ENCODE measurements at regions of chr20 and their contacts with region 1.

Region 1: GRCh38 chr20:18904624-18905023 is 91.0 kb downstream of the SCP2D1 start:
- DNase-seq: peak in 1 of 2 experiments; percentile 41
- H3K4me3 ChIP-seq: no peak overlapping the region
- H3K4me3 Mint-ChIP-seq: no peak overlapping the region
- H3K27ac Mint-ChIP-seq: no peak overlapping the region
- H3K4me1 ChIP-seq: no peaks in the 10 kb centered on the region
- H3K4me1 Mint-ChIP-seq: no peaks in the 10 kb centered on the region
- H3K27me3 ChIP-seq: no peaks in the 10 kb centered on the region; the same call in 1 of the 2 replicates
- H3K27me3 Mint-ChIP-seq: peaks cover 4% of the 10 kb centered on the region
- CTCF ChIP-seq: peak in 1 of 2 experiments; percentile 66

Region 2: DNA sequence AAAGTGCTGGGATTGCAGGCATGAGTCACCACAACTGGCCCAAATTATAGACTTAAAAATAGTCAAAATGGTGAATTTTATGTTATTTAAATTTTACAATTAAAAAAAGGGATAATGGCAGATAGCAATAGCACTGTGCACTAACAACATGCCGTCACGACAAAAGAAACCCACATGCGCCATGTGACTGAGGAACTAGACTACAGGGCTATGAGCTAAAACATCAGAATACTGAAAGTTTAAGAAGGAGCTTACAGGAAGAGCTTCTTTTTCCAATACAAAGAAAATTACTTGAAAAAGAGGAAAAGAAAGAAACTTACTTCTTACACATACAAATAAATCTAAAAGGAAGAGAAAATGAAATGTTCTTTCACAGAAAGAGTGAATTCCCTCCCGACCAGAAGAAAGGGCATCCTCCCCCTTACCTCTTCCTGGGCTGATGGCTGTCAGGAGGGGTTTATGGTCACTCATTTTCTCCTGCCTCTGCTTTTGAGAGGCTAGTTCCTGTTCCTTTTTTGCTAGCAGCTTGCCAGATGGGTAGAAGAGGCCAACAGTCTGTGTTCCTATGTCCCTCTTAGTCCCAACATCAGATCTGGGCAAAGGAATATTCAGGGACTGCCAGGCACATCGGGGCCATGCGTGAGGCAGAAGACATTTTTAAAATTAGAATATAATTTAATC is 492.3 kb before region 1 on chr20:
- CTCF ChIA-PET with region 1: no interaction called
- POLR2A ChIA-PET with region 1: no interaction called
- intact Hi-C with region 1: loop called (anchors 10 kb)
- DNase-seq: no peak
- H3K4me3 ChIP-seq: peak overlapping the region; percentile 20
- H3K4me3 Mint-ChIP-seq: peak overlapping the region; percentile 70
- H3K27ac Mint-ChIP-seq: peak overlapping the region; percentile 84
- H3K4me1 ChIP-seq: no peaks in the 10 kb centered on the region
- H3K4me1 Mint-ChIP-seq: peaks cover 8% of the 10 kb centered on the region
- H3K27me3 ChIP-seq: no peaks in the 10 kb centered on the region
- H3K27me3 Mint-ChIP-seq: no peaks in the 10 kb centered on the region
- CTCF ChIP-seq: no peak

Region 3: DNA sequence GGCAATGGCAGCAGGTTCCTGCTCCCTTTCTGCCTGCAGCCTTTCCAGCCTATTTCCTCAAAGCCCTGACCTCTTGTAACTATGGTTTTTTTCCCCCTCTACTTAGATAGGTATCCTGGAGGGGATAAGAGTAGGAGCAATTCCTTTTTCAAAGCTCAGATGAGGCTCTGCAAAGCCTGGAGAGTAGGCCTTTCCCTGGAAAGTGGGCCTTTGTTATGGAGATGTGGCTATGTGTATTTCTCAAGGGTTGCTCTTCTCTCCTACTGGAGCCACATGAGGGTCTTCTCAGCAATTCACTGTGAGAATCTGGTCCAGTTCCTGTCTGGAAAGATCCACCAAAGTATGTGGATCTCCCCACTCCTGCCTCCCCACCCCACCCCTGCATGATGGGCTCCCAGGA is 220.8 kb before region 1 on chr20:
- CTCF ChIA-PET with region 1: no interaction called
- POLR2A ChIA-PET with region 1: no interaction called
- intact Hi-C with region 1: no loop called
- DNase-seq: no peak
- H3K4me3 ChIP-seq: no peak overlapping the region
- H3K4me3 Mint-ChIP-seq: no peak overlapping the region
- H3K27ac Mint-ChIP-seq: no peak overlapping the region
- H3K4me1 ChIP-seq: no peaks in the 10 kb centered on the region
- H3K4me1 Mint-ChIP-seq: peaks cover 9% of the 10 kb centered on the region
- H3K27me3 ChIP-seq: no peaks in the 10 kb centered on the region
- H3K27me3 Mint-ChIP-seq: no peaks in the 10 kb centered on the region
- CTCF ChIP-seq: no peak

Region 4: GRCh38 chr20:18837718-18838117 is 66.9 kb before region 1 on chr20:
- CTCF ChIA-PET with region 1: interaction called, 9 read pairs
- POLR2A ChIA-PET with region 1: no interaction called
- intact Hi-C with region 1: loop called (anchors 1 kb)
- DNase-seq: peak; percentile 55 to 61
- H3K4me3 ChIP-seq: no peak overlapping the region
- H3K4me3 Mint-ChIP-seq: no peak overlapping the region
- H3K27ac Mint-ChIP-seq: no peak overlapping the region
- H3K4me1 ChIP-seq: peaks cover 12% of the 10 kb centered on the region
- H3K4me1 Mint-ChIP-seq: no peaks in the 10 kb centered on the region
- H3K27me3 ChIP-seq: no peaks in the 10 kb centered on the region
- H3K27me3 Mint-ChIP-seq: peaks cover 2% of the 10 kb centered on the region
- CTCF ChIP-seq: peak in 1 of 2 experiments; percentile 10

Region 5: DNA sequence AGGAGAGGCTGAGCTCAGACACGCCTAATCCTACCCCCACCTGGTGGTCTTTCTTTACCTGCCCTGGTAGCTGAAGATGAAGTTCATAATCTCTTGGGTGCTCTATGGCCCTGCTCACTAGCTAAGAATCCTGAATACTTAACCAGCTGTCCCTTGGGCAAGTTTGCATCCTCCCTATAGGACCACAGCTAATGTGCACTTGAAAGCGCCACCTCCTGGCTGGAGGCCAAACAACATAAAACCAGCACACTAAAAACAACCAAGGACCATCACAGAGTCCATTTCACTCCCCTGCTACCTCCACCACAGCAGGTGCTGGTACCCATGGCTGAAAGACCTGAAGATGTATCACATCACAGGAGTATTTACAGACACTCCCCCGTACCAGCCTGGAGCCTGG is 152.3 kb after region 1 on chr20:
- CTCF ChIA-PET with region 1: interaction called, 9 read pairs
- POLR2A ChIA-PET with region 1: no interaction called
- intact Hi-C with region 1: loop called (anchors 1 kb)
- DNase-seq: peak in 1 of 2 experiments; percentile 22
- H3K4me3 ChIP-seq: no peak overlapping the region
- H3K4me3 Mint-ChIP-seq: no peak overlapping the region
- H3K27ac Mint-ChIP-seq: no peak overlapping the region
- H3K4me1 ChIP-seq: no peaks in the 10 kb centered on the region
- H3K4me1 Mint-ChIP-seq: no peaks in the 10 kb centered on the region
- H3K27me3 ChIP-seq: no peaks in the 10 kb centered on the region
- H3K27me3 Mint-ChIP-seq: peaks cover 3% of the 10 kb centered on the region
- CTCF ChIP-seq: peak; percentile 12 to 17

Region 6: GRCh38 chr20:19205977-19206396 is 301.4 kb after region 1 on chr20:
- CTCF ChIA-PET with region 1: no interaction called
- POLR2A ChIA-PET with region 1: no interaction called
- intact Hi-C with region 1: loop called (anchors 2 kb)
- DNase-seq: peak; percentile 70 to 86
- H3K4me3 ChIP-seq: no peak overlapping the region
- H3K4me3 Mint-ChIP-seq: no peak overlapping the region
- H3K27ac Mint-ChIP-seq: no peak overlapping the region
- H3K4me1 ChIP-seq: no peaks in the 10 kb centered on the region
- H3K4me1 Mint-ChIP-seq: no peaks in the 10 kb centered on the region
- H3K27me3 ChIP-seq: no peaks in the 10 kb centered on the region
- H3K27me3 Mint-ChIP-seq: peaks cover 29% of the 10 kb centered on the region
- CTCF ChIP-seq: peak; percentile 90 to 95

Region 7: DNA sequence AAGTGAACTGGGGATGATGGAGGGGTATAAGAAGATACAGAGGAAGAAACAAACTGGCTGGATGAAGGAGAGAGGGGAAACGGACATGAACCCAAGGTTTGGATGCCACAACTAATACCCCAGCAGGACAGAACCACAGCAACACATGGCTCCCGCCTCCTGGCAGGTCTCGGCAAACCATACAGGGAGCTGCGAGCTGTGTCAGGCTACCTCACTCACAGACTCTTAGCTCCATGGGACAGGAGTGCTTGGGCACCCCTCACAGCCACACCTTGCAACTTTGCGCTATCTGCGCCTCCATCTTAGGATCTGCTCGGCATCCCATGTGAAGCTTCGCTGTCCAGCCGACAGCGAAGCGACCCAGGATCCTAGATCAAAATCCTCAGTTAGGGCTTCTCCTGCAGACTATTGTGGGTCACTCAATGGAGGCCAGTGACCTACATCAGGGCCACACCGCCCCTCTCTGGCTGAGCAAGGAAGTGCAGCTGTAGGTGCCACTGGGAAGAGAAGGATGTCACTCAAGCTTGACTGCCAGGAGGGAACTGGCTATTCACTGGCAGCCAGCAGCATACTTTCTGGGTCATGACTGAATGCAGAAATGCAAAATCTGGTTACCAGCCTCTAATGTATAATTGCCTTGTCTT is 679.0 kb after region 1 on chr20:
- CTCF ChIA-PET with region 1: no interaction called
- POLR2A ChIA-PET with region 1: no interaction called
- intact Hi-C with region 1: loop called (anchors 1 kb)
- DNase-seq: peak; percentile 70 to 81
- H3K4me3 ChIP-seq: no peak overlapping the region
- H3K4me3 Mint-ChIP-seq: no peak overlapping the region
- H3K27ac Mint-ChIP-seq: no peak overlapping the region
- H3K4me1 ChIP-seq: no peaks in the 10 kb centered on the region
- H3K4me1 Mint-ChIP-seq: no peaks in the 10 kb centered on the region
- H3K27me3 ChIP-seq: no peaks in the 10 kb centered on the region
- H3K27me3 Mint-ChIP-seq: peaks cover 26% of the 10 kb centered on the region
- CTCF ChIP-seq: peak; percentile 84 to 87

Region 8: DNA sequence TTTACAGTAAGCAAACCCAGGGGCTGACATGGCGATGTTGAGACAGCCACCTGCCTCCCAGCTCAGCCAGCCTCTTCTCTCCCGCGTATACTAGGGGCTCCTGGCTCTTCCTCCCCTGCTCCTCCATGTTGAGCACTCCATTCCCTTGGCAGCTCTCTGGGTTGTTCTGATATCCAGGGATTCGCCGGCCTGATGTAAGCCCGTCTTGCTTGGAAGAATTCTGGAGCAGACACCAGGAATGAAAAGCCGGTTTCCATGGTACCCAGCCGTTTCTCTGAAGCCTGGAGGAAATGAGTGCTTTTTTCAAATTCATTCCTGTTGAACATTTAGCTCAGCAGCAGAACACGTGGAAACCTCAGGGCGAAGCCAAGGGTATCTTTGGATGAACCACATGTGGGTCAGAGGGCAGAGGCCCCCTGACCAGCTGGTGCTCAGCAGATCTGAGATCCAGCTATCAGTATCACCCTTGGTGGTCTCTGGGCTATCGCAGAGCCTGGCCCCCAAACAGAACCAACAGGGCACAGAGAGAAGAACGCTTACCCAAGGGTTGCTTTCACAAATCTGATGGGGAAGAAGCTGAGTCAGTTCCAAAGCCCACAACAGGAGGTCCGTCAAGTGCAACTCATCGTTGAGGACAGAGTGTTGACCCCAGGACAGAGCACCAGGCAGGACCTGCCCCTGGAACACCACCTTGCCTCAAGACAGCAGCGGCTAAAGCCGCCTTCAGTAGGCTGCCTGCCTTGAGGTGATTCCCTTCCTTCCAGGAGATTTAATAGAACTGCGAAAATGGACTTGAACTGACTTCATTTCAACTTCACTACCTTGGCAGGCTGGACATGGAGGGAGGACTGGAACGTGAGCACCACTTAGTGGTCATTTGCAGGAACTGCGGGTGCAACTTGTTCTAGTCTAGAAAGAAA is 757.4 kb after region 1 on chr20:
- CTCF ChIA-PET with region 1: no interaction called
- POLR2A ChIA-PET with region 1: no interaction called
- intact Hi-C with region 1: loop called (anchors 2 kb)
- DNase-seq: peak; percentile 67 to 72
- H3K4me3 ChIP-seq: no peak overlapping the region
- H3K4me3 Mint-ChIP-seq: no peak overlapping the region
- H3K27ac Mint-ChIP-seq: no peak overlapping the region
- H3K4me1 ChIP-seq: no peaks in the 10 kb centered on the region
- H3K4me1 Mint-ChIP-seq: peaks cover 10% of the 10 kb centered on the region
- H3K27me3 ChIP-seq: 0 out of 2 replicates have a peak, but pooled peaks cover 3% of the 10 kb centered on the region
- H3K27me3 Mint-ChIP-seq: peaks cover 27% of the 10 kb centered on the region
- CTCF ChIP-seq: peak; percentile 91 to 94